ENCODE measurements at regions of chr20 and their contacts with region 1.

Region 1: GRCh38 chr20:62386383-62387218 is at the start of gene RPS21:
- DNase-seq: peak; percentile 80
- H3K4me3 ChIP-seq: peak within 1 kb of the TSS; percentile 98
- H3K27ac ChIP-seq: peak within 1 kb of the TSS; percentile 74
- H3K27me3 ChIP-seq: no peaks in the 10 kb centered on the region
- CTCF ChIP-seq: no peak

Region 2: GRCh38 chr20:62088237-62089127 is 298.1 kb before region 1 on chr20:
- in situ Hi-C with region 1: no loop called
- DNase-seq: peak; percentile 93
- H3K4me3 ChIP-seq: no peak overlapping the region
- H3K27ac ChIP-seq: no peak overlapping the region
- H3K27me3 ChIP-seq: no peaks in the 10 kb centered on the region
- CTCF ChIP-seq: no peak

Region 3: DNA sequence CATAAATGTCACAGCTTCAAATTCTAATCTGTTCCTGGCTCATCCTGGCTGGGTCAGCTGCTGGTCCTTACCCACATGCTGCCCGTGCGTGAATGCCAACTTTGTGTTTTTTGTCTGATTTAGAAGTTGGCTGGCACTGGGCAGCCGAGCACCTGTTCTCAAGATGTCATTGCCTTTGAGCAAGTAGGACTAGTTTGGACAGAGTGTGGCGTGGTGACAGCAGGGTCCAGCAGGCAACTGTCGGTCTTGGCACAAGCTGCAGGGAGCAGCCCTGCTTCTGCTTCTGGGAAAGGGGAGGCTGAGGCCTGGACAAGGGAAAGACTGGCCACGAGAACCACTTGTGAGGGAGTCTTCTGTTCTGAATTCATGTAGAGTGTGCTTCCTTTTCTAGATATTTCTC is 110.2 kb before region 1 on chr20:
- in situ Hi-C with region 1: loop called (anchors 25 kb)
- DNase-seq: no peak
- H3K4me3 ChIP-seq: no peak overlapping the region
- H3K27ac ChIP-seq: no peak overlapping the region
- H3K27me3 ChIP-seq: no peaks in the 10 kb centered on the region
- CTCF ChIP-seq: no peak

Region 4: GRCh38 chr20:63326897-63327745 is 940.5 kb after region 1 on chr20:
- in situ Hi-C with region 1: no loop called
- DNase-seq: no peak
- H3K4me3 ChIP-seq: no peak overlapping the region
- H3K27ac ChIP-seq: no peak overlapping the region
- H3K27me3 ChIP-seq: no peaks in the 10 kb centered on the region
- CTCF ChIP-seq: no peak